Activated naive CD4-positive, alpha-beta T cell treated with anti-CD3 and anti-CD28 coated beads for 36 hours (primary cell): ENCODE measurements at regions of chr1 and their contacts with region 1.

Region 1: DNA sequence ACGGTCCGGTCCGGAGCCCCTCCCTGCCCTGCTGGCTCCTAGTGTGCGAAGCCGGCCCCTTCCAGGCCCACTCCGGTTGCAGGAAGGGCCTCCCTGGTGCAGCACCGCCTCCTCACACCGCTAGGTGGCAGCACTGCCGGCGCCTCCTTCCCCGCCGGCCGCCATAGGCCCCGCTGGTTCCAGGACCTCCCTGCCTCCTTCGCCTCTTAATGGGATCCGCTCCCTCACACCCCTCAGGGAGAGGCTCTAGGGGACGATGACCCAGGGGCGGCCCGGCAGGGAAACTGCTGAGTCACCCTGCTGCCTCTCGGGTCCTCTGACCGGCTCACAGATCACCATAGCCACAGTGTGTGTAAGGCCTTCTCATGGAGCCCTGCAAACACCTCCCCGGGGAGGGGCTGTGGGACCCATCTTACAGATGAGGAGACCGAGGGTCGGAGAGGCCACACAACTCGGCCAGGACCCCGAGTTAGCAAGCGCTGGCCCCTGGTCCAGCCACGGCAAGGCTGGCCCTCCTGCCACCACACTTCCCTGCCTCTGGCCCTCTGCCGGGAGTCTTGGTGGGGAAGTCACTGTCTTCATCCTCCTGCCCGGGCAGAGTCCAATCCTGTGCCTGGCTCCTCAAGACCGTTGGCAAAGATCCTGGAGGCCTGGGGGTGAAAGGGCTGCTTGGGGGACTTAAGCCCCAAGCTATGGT is 1.6 kb upstream of the AJAP1 start:
- DNase-seq: peak; percentile 65
- H3K4me3 Mint-ChIP-seq: no peak overlapping the region
- H3K27ac Mint-ChIP-seq: no peak overlapping the region
- H3K4me1 Mint-ChIP-seq: peaks cover 8% of the 10 kb centered on the region
- H3K27me3 Mint-ChIP-seq: peaks cover 25% of the 10 kb centered on the region

Region 2: DNA sequence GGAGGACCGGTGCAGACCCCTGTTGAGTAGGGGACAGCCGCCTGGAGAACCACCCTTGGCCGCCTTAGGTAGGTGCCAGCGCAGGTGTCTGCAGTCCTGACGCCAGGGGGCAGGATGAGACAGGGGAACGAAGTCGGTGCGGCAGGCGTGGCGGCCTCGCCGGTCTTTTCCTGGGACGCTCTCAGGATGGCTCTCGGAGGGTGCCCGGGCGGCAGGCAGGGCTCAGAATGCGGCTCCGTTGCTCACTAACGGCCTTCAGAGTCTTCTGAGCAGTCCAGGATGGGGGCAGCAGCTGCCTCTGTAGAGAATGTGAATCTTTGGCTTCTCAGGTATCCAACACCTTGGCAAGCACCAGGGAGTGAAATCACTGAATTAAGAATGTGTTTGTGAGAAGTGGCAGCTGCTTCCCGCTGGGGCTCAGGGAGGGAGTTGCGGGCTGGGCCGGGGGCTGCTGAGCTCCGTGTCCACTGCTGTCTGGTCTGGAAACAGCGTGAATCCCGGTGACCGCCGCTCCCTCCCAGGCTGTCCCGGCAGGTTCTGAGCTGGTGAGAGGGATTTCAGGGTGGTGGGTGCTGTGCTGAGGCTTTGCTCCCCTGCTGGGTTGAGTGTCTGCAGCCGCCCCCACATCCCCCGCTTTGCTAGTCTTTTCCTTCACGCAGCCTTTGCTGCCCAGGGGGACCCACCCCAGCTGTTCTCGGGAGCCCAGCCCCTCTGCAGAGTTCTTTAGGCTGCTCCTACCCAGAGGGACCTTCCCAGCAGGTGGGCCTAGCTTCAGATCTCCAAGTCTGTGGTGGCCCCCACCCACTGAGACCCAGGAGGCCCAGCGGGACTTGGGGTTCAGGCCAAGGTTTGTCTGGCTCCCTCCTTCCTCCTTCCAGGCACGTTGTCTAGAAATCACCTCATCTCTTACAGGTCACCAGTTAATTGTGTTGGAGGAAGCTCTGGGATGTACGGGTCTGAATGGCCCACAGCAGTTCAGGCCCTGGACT is 741.6 kb before region 1 on chr1:
- CTCF ChIA-PET with region 1: interaction called, 3 read pairs
- intact Hi-C with region 1: loop called (anchors 2 kb)
- DNase-seq: peak; percentile 84
- H3K4me3 Mint-ChIP-seq: no peak overlapping the region
- H3K27ac Mint-ChIP-seq: no peak overlapping the region
- H3K4me1 Mint-ChIP-seq: peaks cover 4% of the 10 kb centered on the region
- H3K27me3 Mint-ChIP-seq: no peaks in the 10 kb centered on the region

Region 3: GRCh38 chr1:4825800-4826450 is 173.1 kb after region 1 on chr1:
- CTCF ChIA-PET with region 1: no interaction called
- intact Hi-C with region 1: loop called (anchors 5 kb)
- DNase-seq: no peak
- H3K4me3 Mint-ChIP-seq: no peak overlapping the region
- H3K27ac Mint-ChIP-seq: no peak overlapping the region
- H3K4me1 Mint-ChIP-seq: no peaks in the 10 kb centered on the region
- H3K27me3 Mint-ChIP-seq: peaks cover 2% of the 10 kb centered on the region

Region 4: GRCh38 chr1:5273280-5274003 is 620.7 kb after region 1 on chr1:
- CTCF ChIA-PET with region 1: no interaction called
- intact Hi-C with region 1: loop called (anchors 10 kb)
- DNase-seq: peak; percentile 45
- H3K4me3 Mint-ChIP-seq: no peak overlapping the region
- H3K27ac Mint-ChIP-seq: no peak overlapping the region
- H3K4me1 Mint-ChIP-seq: peaks cover 8% of the 10 kb centered on the region
- H3K27me3 Mint-ChIP-seq: no peaks in the 10 kb centered on the region

Region 5: DNA sequence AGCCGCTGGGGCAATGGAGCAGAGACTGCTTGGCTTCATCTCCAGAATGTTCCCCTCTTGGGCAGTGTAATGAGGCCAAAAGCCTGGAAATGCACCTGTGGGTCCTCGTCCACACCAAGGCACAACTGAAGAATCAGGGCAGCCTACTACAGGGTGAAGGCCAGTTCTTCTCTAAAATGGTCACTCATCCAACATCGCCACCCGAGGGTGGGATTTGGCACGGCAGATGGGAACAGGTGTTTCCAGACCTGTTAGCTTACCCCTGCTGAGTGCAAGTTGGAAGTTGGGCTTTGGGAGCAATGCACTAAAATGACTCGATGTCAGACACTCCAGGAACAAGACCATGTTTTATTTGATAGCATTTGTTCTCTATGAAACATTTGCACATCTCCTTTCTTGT is 795.7 kb after region 1 on chr1:
- CTCF ChIA-PET with region 1: no interaction called
- intact Hi-C with region 1: loop called (anchors 10 kb)
- DNase-seq: peak; percentile 62
- H3K4me3 Mint-ChIP-seq: no peak overlapping the region
- H3K27ac Mint-ChIP-seq: no peak overlapping the region
- H3K4me1 Mint-ChIP-seq: peaks cover 2% of the 10 kb centered on the region
- H3K27me3 Mint-ChIP-seq: no peaks in the 10 kb centered on the region

Region 6: DNA sequence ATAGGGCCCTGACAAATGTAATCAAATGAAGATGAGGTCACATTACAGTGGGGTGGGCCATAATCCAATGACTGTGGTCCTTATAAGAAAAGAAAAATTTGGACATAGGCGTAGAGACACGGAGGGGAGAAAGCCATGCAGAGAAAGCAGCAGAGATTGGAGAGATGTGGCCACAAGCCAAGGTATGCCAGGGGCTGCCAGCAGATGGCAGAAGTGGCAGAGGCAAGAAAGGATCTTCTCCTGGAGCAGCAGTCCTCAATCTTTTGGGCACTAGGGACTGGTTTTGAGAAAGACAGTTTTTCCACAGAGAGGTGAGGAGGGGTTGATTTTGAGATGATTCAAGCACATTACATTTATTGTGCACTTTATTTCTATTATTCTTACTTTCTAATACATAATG is 984.4 kb after region 1 on chr1:
- CTCF ChIA-PET with region 1: no interaction called
- intact Hi-C with region 1: no loop called
- DNase-seq: peak; percentile 44
- H3K4me3 Mint-ChIP-seq: no peak overlapping the region
- H3K27ac Mint-ChIP-seq: no peak overlapping the region
- H3K4me1 Mint-ChIP-seq: no peaks in the 10 kb centered on the region
- H3K27me3 Mint-ChIP-seq: peaks cover 19% of the 10 kb centered on the region

Region 7: DNA sequence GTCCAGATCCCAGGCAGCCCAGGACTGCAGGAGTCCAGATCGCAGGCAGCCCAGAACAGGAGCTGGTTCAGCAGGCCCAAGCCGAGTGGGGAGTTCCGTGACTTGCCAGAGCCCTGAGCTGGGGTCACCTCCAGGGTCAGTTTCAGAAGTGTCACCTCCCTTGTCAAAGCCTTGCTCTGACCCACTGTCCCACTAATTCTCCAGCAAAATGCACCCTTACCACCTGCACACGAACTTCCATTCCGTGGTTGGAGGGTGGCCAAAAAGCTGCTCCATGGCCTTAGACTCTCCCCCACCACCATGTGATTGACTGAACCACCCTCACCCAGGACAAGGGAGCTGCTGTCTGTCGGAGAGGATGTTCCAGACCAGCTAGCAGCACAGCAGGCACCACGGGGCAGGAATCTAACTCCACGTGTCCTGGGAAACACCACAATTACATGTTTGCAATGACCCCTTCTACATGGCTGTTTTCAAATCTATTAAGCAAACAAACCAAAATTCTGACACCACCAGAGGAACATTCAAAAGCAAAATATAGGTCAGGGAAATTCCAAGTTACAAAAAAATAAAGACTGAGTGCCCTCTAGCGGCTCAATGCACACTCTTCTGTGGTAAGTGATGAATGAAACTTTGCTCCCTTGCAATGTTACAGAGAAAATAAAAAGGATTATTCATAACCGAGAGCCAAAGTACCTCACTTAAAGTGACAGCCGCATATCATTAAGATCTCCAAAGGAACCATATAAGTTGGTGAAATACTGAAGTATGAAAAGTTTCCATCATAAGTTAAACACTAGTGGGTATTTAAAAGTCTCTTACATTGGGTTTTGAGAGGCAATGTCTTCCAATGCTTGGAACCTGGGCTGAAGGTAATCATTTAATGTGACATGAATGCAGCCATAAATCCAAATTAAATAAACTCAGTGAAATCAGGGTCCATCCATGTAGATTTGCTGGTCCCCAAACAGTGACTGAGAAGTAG is 1263.1 kb after region 1 on chr1:
- CTCF ChIA-PET with region 1: no interaction called
- intact Hi-C with region 1: loop called (anchors 10 kb)
- DNase-seq: peak; percentile 65
- H3K4me3 Mint-ChIP-seq: no peak overlapping the region
- H3K27ac Mint-ChIP-seq: peak overlapping the region; percentile 37
- H3K4me1 Mint-ChIP-seq: peaks cover 8% of the 10 kb centered on the region
- H3K27me3 Mint-ChIP-seq: no peaks in the 10 kb centered on the region